HepG2 (cell line): ENCODE measurements at regions of chr10 and their contacts with region 1.

Region 1: GRCh38 chr10:63629363-63630084 is 108.3 kb downstream of the REEP3 start:
- DNase-seq: peak; percentile 76
- ATAC-seq: peak; percentile 89
- H3K4me3 ChIP-seq: peak overlapping the region; percentile 70 to 85 (median 75)
- H3K27ac ChIP-seq: peak overlapping the region; percentile 60
- H3K4me1 ChIP-seq: peaks cover 30% of the 10 kb centered on the region
- H3K27me3 ChIP-seq: no peaks in the 10 kb centered on the region; a peak in 1 of 5 replicates
- CTCF ChIP-seq: peak; percentile 87
- EP300 ChIP-seq: no peak
- POLR2A ChIP-seq: no peak
- RAD21 ChIP-seq: peak; percentile 72

Region 2: DNA sequence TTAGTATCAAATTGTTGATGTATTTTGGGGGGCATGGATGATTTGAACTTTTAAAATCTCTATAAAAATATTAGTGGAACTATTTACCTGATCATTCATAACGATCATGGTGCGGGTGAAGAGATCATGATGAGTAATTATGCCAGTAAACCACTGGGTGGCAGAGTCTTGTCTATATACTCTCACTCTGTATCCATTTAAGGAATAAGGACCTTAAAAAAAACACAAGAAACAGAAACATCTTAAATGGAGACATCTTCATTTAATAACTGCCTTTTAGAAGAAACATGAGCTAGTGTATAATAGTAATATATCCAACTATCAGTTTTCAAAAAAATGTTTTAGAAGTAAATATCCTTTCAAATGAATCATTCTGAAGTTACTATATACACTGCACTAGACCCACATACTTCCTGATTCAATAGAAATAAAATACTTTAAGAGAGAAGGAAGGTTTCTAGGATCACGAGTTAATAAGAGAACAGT is 412.4 kb before region 1 on chr10:
- CTCF ChIA-PET with region 1: interaction called, 19 read pairs
- POLR2A ChIA-PET with region 1: no interaction called
- in situ Hi-C with region 1: loop called (anchors 5 kb)
- intact Hi-C with region 1: loop called (anchors 1 kb)
- DNase-seq: peak; percentile 44
- ATAC-seq: peak; percentile 88
- H3K4me3 ChIP-seq: no peak overlapping the region
- H3K27ac ChIP-seq: no peak overlapping the region
- H3K4me1 ChIP-seq: no peaks in the 10 kb centered on the region
- H3K27me3 ChIP-seq: no peaks in the 10 kb centered on the region; a peak in 1 of 5 replicates
- CTCF ChIP-seq: peak; percentile 57
- EP300 ChIP-seq: no peak
- POLR2A ChIP-seq: no peak
- RAD21 ChIP-seq: no peak

Region 3: GRCh38 chr10:63465293-63466143 is 164.0 kb before region 1 on chr10 and contains the start of gene JMJD1C:
- CTCF ChIA-PET with region 1: no interaction called
- POLR2A ChIA-PET with region 1: interaction called, 7 read pairs
- in situ Hi-C with region 1: no loop called
- intact Hi-C with region 1: loop called (anchors 1 kb)
- DNase-seq: peak; percentile 62
- ATAC-seq: peak; percentile 88
- H3K4me3 ChIP-seq: peak within 1 kb of the TSS; percentile 78 to 98 (median 96)
- H3K27ac ChIP-seq: peak within 1 kb of the TSS; percentile 97
- H3K4me1 ChIP-seq: peaks cover 49% of the 10 kb centered on the region
- H3K27me3 ChIP-seq: no peaks in the 10 kb centered on the region; a peak in 1 of 5 replicates
- CTCF ChIP-seq: peak; percentile 57
- EP300 ChIP-seq: peak; percentile 30 to 56; a peak in 2 of 4 replicates
- POLR2A ChIP-seq: peak; percentile 70 to 83
- RAD21 ChIP-seq: peak; percentile 71
- total RNA-seq, gene JMJD1C: 42.7 and 51.4 TPM in 2 replicates

Region 4: GRCh38 chr10:63720072-63720537 is 90.6 kb after region 1 on chr10:
- CTCF ChIA-PET with region 1: no interaction called
- POLR2A ChIA-PET with region 1: no interaction called
- in situ Hi-C with region 1: loop called (anchors 10 kb)
- intact Hi-C with region 1: loop called (anchors 2 kb)
- DNase-seq: peak; percentile 48
- ATAC-seq: peak; percentile 40; the same call in 2 of the 3 replicates
- H3K4me3 ChIP-seq: no peak overlapping the region
- H3K27ac ChIP-seq: no peak overlapping the region
- H3K4me1 ChIP-seq: peaks cover 14% of the 10 kb centered on the region
- H3K27me3 ChIP-seq: peaks cover 0 to 4% of the 10 kb centered on the region in 2 experiments; a peak in 2 of 5 replicates
- CTCF ChIP-seq: peak; percentile 74
- EP300 ChIP-seq: no peak
- POLR2A ChIP-seq: no peak
- RAD21 ChIP-seq: peak; percentile 68